PC-9 (cell line): ENCODE measurements at regions of chr6 and their contacts with region 1.

Region 1: DNA sequence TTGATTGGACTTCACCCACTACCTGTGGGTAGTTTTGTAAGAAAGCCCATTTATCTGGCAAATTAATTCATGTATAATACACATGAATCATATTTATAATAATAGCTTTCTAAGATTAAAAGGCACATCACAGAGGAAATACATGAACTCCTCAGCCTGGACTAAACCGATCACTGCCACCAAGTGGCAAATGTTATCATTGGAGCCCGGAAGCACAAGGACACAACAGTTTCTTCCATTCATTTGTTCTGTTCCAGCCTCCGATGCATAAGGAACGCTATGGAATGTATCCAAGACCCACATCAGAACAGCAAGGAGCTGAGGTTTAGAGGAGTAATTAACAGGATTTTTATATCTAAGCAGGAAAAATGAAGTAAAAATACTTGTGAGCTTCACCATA is 13.9 kb upstream of the IPCEF1 start:
- DNase-seq: no peak
- H3K4me3 ChIP-seq: no peak overlapping the region
- H3K27ac ChIP-seq: no peak overlapping the region
- H3K4me1 ChIP-seq: peaks cover 12% of the 10 kb centered on the region
- H3K27me3 ChIP-seq: no peaks in the 10 kb centered on the region
- CTCF ChIP-seq: peak; percentile 44; the same call in 1 of the 2 replicates

Region 2: DNA sequence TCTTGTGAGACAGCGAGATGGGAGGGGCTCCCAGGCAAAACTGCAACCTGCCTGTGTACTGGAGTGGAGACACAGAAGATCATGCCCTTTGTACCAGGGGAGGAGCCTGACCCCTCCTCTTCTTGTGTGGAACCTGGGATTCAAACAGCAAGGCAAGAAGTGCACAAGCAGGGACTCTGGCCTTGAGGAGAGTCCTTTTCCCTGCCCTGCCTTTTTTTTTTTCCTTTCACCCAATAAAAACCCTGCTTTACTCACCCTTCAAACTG is 583.3 kb before region 1 on chr6:
- CTCF ChIA-PET with region 1: no interaction called
- POLR2A ChIA-PET with region 1: no interaction called
- intact Hi-C with region 1: loop called (anchors 10 kb)
- DNase-seq: no peak
- H3K4me3 ChIP-seq: no peak overlapping the region
- H3K27ac ChIP-seq: no peak overlapping the region
- H3K4me1 ChIP-seq: no peaks in the 10 kb centered on the region
- H3K27me3 ChIP-seq: no peaks in the 10 kb centered on the region
- CTCF ChIP-seq: no peak